ENCODE measurements at regions of chr5 and their contacts with region 1.

Region 1: DNA sequence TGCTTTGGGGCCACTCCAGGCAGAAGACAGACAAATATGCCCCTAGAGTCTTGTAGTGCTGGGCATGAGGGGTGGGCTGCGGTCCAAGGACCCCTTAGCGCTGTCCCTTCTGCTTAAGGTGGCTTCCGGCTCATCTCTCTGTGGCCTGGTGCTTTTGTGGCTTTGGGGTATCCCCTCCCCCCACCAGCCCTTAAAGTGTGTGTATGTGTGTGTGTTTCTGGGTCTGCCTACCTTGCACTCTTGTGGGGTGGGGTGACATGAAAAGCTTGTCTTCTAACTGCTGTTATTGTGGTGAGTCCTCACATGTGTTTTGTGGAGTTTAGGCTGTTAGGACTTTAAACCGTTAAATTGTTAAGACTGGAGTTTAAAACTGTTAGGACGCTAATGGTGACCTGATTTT is 23.6 kb downstream of the MARCHF6 start:
- DNase-seq: no peak
- ATAC-seq: peak; percentile 16; the same call in 1 of the 3 replicates
- H3K4me3 ChIP-seq: no peak overlapping the region
- H3K27ac ChIP-seq: no peak overlapping the region
- H3K4me1 ChIP-seq: no peaks in the 10 kb centered on the region
- H3K27me3 ChIP-seq: no peaks in the 10 kb centered on the region
- CTCF ChIP-seq: no peak
- EP300 ChIP-seq: no peak
- POLR2A ChIP-seq: no peak; the same call in 1 of the 2 replicates
- RAD21 ChIP-seq: no peak

Region 2: DNA sequence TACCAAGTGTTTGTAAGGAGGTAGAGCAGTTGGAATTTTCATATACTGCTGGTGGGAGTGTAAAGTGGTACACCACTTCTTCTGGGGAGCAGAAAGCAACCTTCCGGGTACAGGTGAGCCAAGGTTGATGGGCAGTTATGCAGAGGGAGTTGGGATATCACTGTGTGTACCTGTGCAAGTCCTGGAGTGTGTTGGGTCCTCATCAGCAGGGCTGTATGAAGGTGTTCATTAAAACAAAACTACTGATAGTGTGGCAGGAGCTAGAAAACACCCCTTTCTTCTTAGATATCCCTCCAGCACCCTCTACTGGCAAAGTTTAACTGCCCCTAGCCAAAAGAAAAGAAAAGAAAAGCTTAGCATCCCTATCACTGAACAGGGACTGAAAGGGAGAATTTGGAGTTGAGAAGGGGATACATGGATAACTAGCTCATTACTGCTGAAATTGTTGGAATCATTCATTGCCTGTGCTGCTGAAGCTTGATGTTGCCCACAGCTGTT is 12.8 kb before region 1 on chr5:
- CTCF ChIA-PET with region 1: interaction called, 14 read pairs
- POLR2A ChIA-PET with region 1: no interaction called
- RAD21 ChIA-PET with region 1: no interaction called
- SMC1A ChIA-PET with region 1: interaction called, 5 read pairs
- in situ Hi-C with region 1: no loop called
- intact Hi-C with region 1: no loop called
- DNase-seq: no peak
- ATAC-seq: peak; percentile 72
- H3K4me3 ChIP-seq: no peak overlapping the region
- H3K27ac ChIP-seq: no peak overlapping the region
- H3K4me1 ChIP-seq: peaks cover 6% of the 10 kb centered on the region
- H3K27me3 ChIP-seq: no peaks in the 10 kb centered on the region
- CTCF ChIP-seq: peak in 2 of 3 experiments; percentile 29 to 32; a peak in 3 of 6 replicates
- EP300 ChIP-seq: no peak
- POLR2A ChIP-seq: no peak
- RAD21 ChIP-seq: peak; percentile 39

Region 3: DNA sequence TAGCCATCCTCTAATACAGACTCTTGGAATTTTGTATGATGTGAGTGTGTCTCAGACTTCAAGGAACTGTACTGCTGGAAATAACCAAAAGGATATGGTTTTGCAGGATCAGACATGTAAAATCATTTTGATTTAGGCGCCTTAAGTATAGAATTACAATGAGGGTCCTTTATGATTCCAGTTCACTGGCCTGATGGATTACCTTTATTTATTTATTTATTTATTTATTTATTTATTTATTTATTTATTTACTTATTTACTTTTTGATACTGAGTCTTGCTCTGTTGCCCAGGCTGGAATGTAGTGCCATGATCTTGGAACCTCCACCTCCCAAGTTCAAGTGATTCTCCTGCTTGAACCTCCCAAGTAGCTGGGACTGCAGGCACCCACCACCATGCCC is 26.7 kb after region 1 on chr5:
- CTCF ChIA-PET with region 1: no interaction called
- POLR2A ChIA-PET with region 1: no interaction called
- RAD21 ChIA-PET with region 1: no interaction called
- SMC1A ChIA-PET with region 1: no interaction called
- in situ Hi-C with region 1: no loop called
- intact Hi-C with region 1: no loop called
- DNase-seq: no peak
- ATAC-seq: no peak
- H3K4me3 ChIP-seq: no peak overlapping the region
- H3K27ac ChIP-seq: no peak overlapping the region
- H3K4me1 ChIP-seq: peaks cover 10% of the 10 kb centered on the region; the same call in 1 of the 2 replicates
- H3K27me3 ChIP-seq: no peaks in the 10 kb centered on the region
- CTCF ChIP-seq: no peak
- EP300 ChIP-seq: no peak
- POLR2A ChIP-seq: no peak
- RAD21 ChIP-seq: no peak

Region 4: DNA sequence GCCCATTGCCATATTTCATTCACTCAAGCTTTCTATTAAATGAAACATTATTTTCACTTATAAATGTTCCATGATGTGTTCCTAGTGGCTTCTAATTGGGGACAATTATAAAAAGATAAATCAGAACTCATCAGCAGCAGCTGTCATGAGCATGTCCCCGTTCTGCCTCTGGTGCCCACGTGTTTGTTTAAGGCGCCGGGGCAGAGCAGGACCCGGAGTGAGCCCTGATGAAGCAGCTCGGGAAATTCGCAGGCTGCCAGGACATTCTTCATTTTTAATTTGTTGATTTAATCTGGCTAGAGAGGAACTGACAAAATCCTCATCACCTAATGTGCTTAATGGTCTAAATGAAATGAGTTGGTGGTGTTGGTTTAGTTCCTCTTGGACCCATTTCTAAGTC is 1052.2 kb after region 1 on chr5:
- CTCF ChIA-PET with region 1: no interaction called
- POLR2A ChIA-PET with region 1: no interaction called
- RAD21 ChIA-PET with region 1: no interaction called
- SMC1A ChIA-PET with region 1: no interaction called
- in situ Hi-C with region 1: no loop called
- intact Hi-C with region 1: no loop called
- DNase-seq: no peak
- ATAC-seq: no peak
- H3K4me3 ChIP-seq: no peak overlapping the region
- H3K27ac ChIP-seq: no peak overlapping the region
- H3K4me1 ChIP-seq: no peaks in the 10 kb centered on the region
- H3K27me3 ChIP-seq: no peaks in the 10 kb centered on the region; a peak in 1 of 4 replicates
- CTCF ChIP-seq: no peak
- EP300 ChIP-seq: no peak
- POLR2A ChIP-seq: no peak
- RAD21 ChIP-seq: no peak

Measured in GM12878 (cell line).